IMR-90 (cell line): ENCODE measurements at regions of chr6 and their contacts with region 1.

Region 1: DNA sequence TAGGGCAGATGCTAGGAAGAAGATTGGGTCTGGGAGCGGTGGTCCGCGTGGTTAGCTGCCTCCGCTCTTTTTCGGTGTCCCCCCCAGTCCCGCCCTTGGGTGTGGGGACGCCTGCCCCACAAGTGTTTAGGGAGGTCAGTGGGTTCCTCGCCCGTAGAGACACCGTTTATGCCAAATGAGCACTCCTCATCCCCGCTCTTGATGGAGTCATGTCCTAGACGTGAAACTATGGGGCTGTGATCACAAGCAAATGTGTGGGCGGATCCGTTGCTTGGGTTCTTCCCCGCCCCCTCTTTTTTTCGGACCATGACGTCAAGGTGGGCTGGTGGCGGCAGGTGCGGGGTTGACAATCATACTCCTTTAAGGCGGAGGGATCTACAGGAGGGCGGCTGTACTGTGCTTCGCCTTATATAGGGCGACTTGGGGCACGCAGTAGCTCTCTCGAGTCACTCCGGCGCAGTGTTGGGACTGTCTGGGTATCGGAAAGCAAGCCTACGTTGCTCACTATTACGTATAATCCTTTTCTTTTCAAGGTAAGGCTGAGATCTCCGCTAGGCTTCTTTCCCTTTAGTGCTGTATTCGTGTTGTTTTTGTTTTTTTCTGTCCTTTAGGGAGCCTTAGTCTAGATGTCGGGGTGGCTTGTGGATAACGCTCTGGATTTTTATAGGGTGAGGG is at the start of gene HSP90AB1:
- DNase-seq: peak; percentile 98
- ATAC-seq: peak; percentile 75
- H3K4me3 ChIP-seq: peak within 1 kb of the TSS; percentile 85
- H3K27ac ChIP-seq: peak within 1 kb of the TSS; percentile 83
- H3K4me1 ChIP-seq: peaks cover 5% of the 10 kb centered on the region
- H3K27me3 ChIP-seq: no peaks in the 10 kb centered on the region
- CTCF ChIP-seq: no peak
- POLR2A ChIP-seq: peak; percentile 100
- RAD21 ChIP-seq: no peak
- total RNA-seq, gene HSP90AB1: 1,307 and 1,440 TPM in 2 replicates

Region 2: GRCh38 chr6:43269273-43270007 is 977.4 kb before region 1 on chr6:
- CTCF ChIA-PET with region 1: no interaction called
- POLR2A ChIA-PET with region 1: no interaction called
- dilution Hi-C with region 1: no loop called
- in situ Hi-C with region 1: no loop called
- intact Hi-C with region 1: no loop called
- DNase-seq: no peak
- ATAC-seq: peak; percentile 74
- H3K4me3 ChIP-seq: peak overlapping the region; percentile 30
- H3K27ac ChIP-seq: no peak overlapping the region
- H3K4me1 ChIP-seq: peaks cover 2% of the 10 kb centered on the region; the same call in 1 of the 2 replicates
- H3K27me3 ChIP-seq: peaks cover 71% of the 10 kb centered on the region
- CTCF ChIP-seq: no peak
- POLR2A ChIP-seq: no peak
- RAD21 ChIP-seq: no peak

Region 3: GRCh38 chr6:44064089-44064947 is 182.5 kb before region 1 on chr6:
- CTCF ChIA-PET with region 1: no interaction called
- POLR2A ChIA-PET with region 1: no interaction called
- dilution Hi-C with region 1: no loop called
- in situ Hi-C with region 1: no loop called
- intact Hi-C with region 1: no loop called
- DNase-seq: peak; percentile 100
- ATAC-seq: peak; percentile 73
- H3K4me3 ChIP-seq: no peak overlapping the region
- H3K27ac ChIP-seq: peak overlapping the region; percentile 71
- H3K4me1 ChIP-seq: peaks cover 58% of the 10 kb centered on the region
- H3K27me3 ChIP-seq: no peaks in the 10 kb centered on the region
- CTCF ChIP-seq: no peak
- POLR2A ChIP-seq: peak; percentile 76
- RAD21 ChIP-seq: peak; percentile 27; the same call in 1 of the 2 replicates

Region 4: DNA sequence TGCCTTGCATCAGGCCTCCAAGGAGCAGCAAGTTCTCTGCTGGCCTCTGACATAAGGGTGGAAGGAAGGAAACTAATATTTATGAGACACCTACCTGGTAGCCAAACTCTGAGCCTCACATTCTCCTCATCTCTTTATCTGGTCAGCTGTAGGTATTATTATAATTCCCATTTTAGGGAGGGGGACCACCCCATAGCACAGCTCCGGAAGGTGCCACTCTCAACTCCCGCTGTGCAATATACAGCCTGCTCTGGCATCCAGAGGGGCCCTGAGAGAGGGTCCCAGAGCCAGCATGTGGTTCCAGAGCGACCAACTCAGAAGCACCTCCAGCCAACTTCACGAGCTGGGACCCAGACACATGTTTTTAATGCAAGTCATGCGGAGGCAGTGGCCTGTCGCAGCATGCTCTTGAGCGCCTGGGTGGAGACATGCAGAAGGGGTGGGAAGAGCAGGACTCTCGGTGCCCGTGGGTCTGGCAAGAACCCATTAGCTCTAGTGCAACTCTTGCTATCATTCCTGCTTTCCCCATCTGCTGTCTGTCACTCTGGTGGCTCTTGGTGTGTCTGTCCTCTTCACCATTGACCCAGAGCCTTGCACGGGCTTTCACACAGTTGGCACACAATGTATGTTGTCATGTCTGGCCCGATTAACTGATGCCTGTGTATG is 45.0 kb before region 1 on chr6:
- CTCF ChIA-PET with region 1: no interaction called
- POLR2A ChIA-PET with region 1: no interaction called
- dilution Hi-C with region 1: no loop called
- in situ Hi-C with region 1: no loop called
- intact Hi-C with region 1: no loop called
- DNase-seq: no peak
- ATAC-seq: no peak
- H3K4me3 ChIP-seq: no peak overlapping the region
- H3K27ac ChIP-seq: no peak overlapping the region
- H3K4me1 ChIP-seq: no peaks in the 10 kb centered on the region
- H3K27me3 ChIP-seq: peaks cover 18% of the 10 kb centered on the region
- CTCF ChIP-seq: no peak
- POLR2A ChIP-seq: no peak
- RAD21 ChIP-seq: no peak

Region 5: GRCh38 chr6:44257025-44257752 is 10.4 kb after region 1 on chr6 and contains the start of gene SLC35B2:
- CTCF ChIA-PET with region 1: interaction called, 4 read pairs
- POLR2A ChIA-PET with region 1: interaction called, 27 read pairs
- dilution Hi-C with region 1: no loop called
- in situ Hi-C with region 1: no loop called
- intact Hi-C with region 1: no loop called
- DNase-seq: peak; percentile 67
- ATAC-seq: peak; percentile 85
- H3K4me3 ChIP-seq: peak within 1 kb of the TSS; percentile 94
- H3K27ac ChIP-seq: peak within 1 kb of the TSS; percentile 94
- H3K4me1 ChIP-seq: peaks cover 8% of the 10 kb centered on the region
- H3K27me3 ChIP-seq: no peaks in the 10 kb centered on the region
- CTCF ChIP-seq: peak; percentile 75
- POLR2A ChIP-seq: peak; percentile 65
- RAD21 ChIP-seq: peak; percentile 45
- total RNA-seq, gene SLC35B2: 41.7 and 51.4 TPM in 2 replicates